Pancreas (tissue), 10 donors: ENCODE measurements at regions of chr3 and their contacts with region 1.

Region 1: GRCh38 chr3:141561426-141562034 is 74.7 kb downstream of the RASA2 start:
- DNase-seq: peak in 3 of 6 donors; percentile 4 to 27 (median 16)
- ATAC-seq: peak; percentile 63 to 87 (median 74)
- H3K4me3 ChIP-seq: no peak overlapping the region
- H3K27ac ChIP-seq: no peak overlapping the region
- H3K4me1 ChIP-seq: no peaks in the 10 kb centered on the region
- H3K27me3 ChIP-seq: no peaks in the 10 kb centered on the region
- CTCF ChIP-seq: peak; percentile 47 to 81 (median 70)

Region 2: DNA sequence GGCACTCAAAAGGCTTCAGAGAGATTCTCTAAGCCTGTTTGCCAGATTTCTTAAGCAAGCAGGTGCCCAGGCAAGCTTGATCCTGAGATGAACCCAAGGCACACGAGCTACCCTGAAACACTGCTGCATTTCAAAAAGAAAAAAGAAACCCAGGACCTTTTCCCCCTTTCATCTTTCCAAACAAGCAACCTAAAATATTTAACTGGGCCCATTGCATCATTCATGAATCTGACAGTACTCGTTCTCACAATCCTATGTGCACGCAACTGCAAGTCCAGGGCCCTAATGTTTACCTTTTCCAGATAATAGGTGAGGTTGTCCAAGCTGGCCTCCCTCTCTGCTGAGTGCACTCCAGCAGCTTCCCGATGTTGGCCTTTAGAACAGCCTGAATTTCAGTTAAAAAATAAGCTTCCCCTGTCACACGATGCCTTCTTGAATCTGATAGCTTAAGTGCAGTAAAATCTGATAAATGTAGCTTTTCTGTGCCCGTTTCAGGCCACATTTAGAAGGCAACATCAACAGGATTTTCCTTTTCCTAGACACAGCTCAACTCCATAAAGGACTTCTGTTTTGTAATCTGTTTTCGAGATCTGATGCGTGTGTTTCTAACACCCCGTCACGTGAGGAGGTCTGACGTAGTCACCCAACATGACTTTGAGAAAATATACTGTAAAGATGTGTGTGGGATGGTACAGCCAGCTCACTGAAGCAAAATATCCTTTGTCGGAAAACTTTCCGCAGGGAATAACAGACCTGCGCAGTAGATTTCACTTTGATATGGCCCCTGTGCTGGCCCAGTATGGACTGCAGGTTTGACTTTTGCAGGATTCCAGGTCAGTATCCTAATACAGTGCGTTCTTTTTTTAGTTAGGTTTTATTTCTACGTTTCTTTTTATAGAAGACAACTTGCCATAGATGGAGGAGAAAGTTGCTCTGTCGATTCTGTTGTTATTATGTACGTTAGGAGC is 129.8 kb before region 1 on chr3:
- intact Hi-C with region 1: no loop called
- DNase-seq: no peak
- ATAC-seq: peak; percentile 55 to 75 (median 62)
- H3K4me3 ChIP-seq: no peak overlapping the region
- H3K27ac ChIP-seq: peak overlapping the region in 2 of 4 donors; percentile 25 to 34
- H3K4me1 ChIP-seq: peaks cover 4 to 51% (median 28%) of the 10 kb centered on the region in 3 donors
- H3K27me3 ChIP-seq: no peaks in the 10 kb centered on the region
- CTCF ChIP-seq: no peak

Region 3: DNA sequence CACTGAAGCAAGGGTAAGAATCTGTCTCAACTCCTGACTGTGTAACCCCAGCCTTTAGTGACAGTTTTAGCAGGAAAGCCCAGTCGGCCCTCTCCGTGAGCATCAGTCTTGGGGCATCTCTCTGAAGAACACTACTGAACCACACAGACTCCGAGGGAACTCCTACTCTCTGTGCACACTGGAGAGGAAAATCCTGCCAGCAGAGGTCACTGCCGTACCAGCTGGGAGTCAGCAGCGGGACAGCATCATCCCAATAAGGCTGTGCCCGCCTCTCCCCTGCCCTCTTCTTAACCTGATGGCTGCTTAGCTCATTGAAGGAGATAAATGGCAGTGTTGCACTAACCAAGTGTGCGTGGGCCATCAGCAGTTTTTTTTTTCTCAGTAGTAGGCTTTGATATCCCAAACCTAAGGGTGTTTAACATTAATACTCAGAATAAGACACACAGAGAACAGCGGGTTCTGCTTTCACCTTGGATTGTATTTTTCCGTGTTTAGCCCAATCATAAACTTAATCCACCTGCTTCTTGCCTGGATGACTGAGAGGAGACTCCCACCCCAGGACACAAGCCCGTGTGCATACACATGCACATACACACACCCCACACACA is 101.3 kb before region 1 on chr3:
- intact Hi-C with region 1: loop called in 2 of 3 experiments (anchors 5 kb)
- DNase-seq: peak; percentile 73 to 88 (median 84)
- ATAC-seq: peak; percentile 88 to 97 (median 96)
- H3K4me3 ChIP-seq: no peak overlapping the region
- H3K27ac ChIP-seq: no peak overlapping the region
- H3K4me1 ChIP-seq: no peaks in the 10 kb centered on the region
- H3K27me3 ChIP-seq: no peaks in the 10 kb centered on the region
- CTCF ChIP-seq: peak; percentile 61 to 83 (median 80)

Region 4: DNA sequence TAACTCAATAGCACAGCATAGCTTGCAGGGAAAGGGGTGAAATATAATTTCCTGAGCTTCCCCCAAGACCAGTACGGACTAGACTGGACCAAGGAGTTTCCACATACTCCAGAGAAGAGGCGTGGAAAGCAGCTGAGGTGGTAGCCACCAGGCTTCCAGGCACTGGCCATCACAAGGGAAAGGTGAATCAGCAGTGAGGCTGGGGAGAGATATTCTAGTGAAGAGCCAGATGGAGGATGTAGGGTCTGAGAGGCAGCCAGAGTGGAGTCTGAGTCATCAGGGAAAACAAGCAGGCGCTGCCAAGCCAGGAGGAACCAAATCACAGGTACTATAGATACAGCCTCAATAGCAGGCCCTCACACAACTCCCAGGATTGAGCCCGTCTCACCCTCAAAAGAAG is 84.3 kb before region 1 on chr3:
- intact Hi-C with region 1: loop called in 1 of 3 experiments (anchors 5 kb)
- DNase-seq: no peak
- ATAC-seq: peak in 3 of 4 donors; percentile 44 to 86 (median 52)
- H3K4me3 ChIP-seq: no peak overlapping the region
- H3K27ac ChIP-seq: no peak overlapping the region
- H3K4me1 ChIP-seq: no peaks in the 10 kb centered on the region
- H3K27me3 ChIP-seq: no peaks in the 10 kb centered on the region
- CTCF ChIP-seq: no peak